ENCODE measurements at regions of chr9 and their contacts with region 1.

Region 1: GRCh38 chr9:128341435-128341849 is 1.1 kb downstream of the SLC27A4 start:
- DNase-seq: peak; percentile 94
- H3K27ac ChIP-seq: peak overlapping the region; percentile 86
- CTCF ChIP-seq: peak; percentile 98

Region 2: DNA sequence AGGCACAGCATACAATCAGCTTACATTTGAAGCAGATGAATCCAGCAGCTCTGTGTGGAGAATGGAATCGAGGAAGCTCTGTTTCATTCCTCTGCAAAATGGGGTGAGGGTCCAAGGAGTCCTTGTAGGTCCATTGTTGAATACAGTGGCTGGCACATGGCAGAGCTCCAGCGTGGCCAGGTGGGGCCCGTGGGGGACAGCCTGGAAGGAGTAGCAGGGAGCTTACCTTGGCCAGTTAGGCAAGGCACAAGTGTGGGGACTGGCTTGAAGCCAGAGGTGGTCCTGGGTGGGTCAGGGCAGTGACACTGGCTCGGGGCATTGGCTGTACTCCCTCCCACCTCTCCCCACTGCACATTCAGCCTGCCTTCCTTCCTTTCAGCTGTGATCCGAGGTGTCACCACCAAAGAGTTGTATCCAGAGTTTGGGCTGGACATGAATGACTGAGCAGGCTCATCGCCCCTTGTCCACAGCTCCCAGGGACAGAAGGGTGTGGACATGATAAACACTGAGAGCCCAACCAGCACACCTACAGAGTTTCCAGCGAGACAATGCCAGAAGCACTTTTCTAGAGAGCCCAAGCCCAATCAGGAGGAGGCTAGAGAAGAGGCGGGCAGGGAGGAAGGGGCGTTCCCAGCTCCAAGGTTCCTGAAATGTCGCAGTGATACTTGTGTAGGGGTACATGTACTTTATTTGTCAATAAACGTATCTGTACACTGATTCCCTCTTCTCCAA is 53.0 kb before region 1 on chr9:
- CTCF ChIA-PET with region 1: interaction called, 16 read pairs
- POLR2A ChIA-PET with region 1: no interaction called
- DNase-seq: no peak
- H3K27ac ChIP-seq: peak overlapping the region; percentile 14
- CTCF ChIP-seq: no peak

Region 3: GRCh38 chr9:128296337-128297220 is 44.9 kb before region 1 on chr9:
- CTCF ChIA-PET with region 1: interaction called, 48 read pairs
- POLR2A ChIA-PET with region 1: no interaction called
- DNase-seq: no peak
- H3K27ac ChIP-seq: peak overlapping the region; percentile 71
- CTCF ChIP-seq: no peak

Region 4: DNA sequence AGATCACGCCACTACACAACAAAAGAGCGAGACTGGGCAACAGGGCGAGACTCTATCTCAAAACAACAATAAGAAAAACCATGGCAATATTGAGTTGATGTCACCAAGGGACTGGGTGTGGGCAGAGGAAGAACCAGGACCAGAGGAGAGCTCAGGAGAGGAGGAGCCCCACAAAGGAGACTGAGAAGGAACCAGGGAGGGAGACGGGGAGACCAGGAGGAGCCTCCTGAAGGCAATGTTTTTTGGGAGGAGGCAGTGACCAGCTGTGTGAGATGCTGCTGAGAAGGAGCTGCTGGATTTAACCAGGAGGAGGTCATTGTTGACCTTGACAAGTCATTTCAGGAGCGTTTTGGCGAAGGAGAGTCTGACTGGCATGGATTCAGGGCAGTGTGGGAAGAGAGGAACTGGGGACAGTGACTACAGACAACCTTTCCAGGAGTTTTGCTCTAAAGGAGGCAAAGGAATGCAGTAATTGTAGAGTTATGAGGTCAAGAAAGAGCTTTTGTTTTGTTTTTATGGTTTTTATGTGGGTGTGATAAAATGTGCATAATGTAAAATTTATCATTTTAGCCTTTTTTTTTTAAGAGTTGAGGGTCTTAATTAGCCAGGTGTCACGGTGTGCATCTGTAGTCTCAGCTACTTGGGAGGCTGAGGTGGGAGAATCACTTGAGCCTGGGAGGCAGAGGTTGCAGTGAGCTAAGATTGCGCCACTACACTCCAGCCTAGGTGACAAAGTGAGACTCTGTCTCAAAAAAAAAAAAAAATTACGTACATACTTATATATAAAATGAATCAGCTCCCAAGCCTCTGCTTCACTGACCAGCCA is 37.1 kb before region 1 on chr9:
- CTCF ChIA-PET with region 1: interaction called, 23 read pairs
- POLR2A ChIA-PET with region 1: no interaction called
- DNase-seq: no peak
- H3K27ac ChIP-seq: peak overlapping the region; percentile 93
- CTCF ChIP-seq: no peak

Region 5: DNA sequence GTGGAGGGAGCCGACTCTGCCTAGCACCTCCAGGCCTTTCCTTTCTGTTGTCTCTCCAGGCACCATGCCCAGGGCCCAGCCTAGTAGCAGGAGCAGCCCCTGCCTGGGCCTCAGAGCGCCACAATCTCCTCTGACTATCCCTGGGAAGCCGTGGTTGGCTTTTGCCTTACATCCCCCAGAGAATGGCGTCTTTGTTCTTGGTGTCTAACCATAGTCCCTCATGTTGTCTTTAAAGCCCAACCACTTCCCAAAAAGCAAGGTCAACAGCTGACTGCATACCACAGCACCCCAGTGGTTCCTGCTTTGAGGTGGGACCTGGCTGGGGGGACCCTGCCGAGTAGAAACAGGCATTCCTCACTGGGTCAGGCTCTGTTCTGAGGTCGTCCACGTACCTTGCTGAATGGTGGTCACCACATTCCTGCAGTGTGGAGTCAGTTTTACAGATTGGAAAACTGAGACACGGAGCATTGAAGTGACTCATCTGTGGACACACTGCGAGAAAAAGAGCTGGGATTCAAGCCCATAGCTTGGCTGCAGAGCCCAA is 65.5 kb after region 1 on chr9:
- CTCF ChIA-PET with region 1: no interaction called
- POLR2A ChIA-PET with region 1: no interaction called
- DNase-seq: no peak
- H3K27ac ChIP-seq: no peak overlapping the region
- CTCF ChIP-seq: no peak

Measured in RWPE1 (cell line).